GM10248 (cell line): ENCODE measurements at regions of chr14 and their contacts with region 1.

Region 1: DNA sequence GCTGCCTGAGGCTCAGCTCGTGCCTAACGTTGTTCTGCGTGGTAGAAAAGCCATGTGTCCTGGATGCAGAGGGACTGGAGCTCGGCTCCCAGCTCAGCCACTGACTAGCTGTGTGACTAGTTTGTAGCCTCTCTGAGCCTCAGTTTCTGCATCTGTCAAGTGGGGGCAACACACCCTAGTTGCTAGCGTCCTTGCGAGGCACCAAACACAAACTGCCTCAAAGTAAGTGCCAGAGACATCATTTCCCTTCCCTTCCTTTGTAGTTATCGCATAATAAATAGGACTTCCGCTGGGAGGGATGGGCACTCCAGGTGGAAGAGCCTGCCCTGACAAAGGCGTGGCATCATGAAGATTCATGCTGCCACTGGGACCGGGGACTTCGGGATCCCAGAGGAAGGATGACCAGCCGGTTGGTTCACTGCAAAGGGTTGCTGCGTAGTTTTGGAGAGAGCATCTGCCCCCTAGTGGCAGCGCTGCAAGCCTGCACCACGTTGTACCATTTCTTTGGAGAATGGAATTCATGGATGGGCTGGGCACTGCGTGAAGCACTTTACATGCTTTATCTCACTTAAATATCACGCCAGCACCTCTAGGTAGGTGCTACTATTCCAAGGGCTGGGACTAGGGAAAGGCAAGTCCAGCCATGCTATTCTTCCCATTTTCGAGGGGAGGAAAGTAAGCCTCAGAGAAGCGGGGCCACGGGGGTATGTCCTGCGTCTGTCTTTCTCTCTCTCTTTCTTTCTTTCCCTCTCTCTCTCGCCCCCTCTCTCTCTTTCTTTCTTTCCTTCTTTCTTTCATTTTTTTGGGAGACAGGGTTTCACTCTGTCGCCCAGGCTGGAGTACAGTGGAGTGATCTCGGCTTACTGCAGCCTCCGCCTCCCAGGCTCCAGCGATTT is 4.6 kb downstream of the CCDC197 start:
- DNase-seq: peak; percentile 82
- CTCF ChIP-seq: peak; percentile 97

Region 2: DNA sequence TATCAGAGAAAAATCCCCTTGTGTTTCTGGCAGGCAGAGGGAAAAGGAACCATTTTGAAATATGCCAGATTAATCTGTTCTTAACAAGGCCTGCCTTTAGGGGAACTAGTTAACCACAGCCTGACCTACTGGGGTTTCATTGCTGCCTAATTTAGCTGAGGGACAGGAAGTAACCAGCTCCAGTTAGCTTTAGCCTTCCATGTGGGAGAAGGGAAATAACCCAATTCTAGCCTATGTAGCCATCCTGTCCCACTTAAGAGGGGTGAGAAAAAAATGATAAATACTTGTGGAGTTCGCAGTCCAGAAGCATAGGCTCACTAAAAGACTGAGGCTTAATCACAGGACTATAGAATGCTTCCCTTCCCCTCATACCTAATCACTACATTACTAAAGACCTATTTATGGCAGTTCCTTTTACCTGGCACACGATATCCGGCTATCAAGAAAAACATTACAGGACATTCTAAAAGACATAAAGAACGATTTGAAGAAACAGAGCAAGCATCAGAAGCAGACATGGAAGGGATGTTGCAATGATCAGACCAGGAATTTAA is 632.0 kb before region 1 on chr14:
- CTCF ChIA-PET with region 1: no interaction called
- POLR2A ChIA-PET with region 1: no interaction called
- DNase-seq: peak; percentile 46
- CTCF ChIP-seq: no peak

Region 3: DNA sequence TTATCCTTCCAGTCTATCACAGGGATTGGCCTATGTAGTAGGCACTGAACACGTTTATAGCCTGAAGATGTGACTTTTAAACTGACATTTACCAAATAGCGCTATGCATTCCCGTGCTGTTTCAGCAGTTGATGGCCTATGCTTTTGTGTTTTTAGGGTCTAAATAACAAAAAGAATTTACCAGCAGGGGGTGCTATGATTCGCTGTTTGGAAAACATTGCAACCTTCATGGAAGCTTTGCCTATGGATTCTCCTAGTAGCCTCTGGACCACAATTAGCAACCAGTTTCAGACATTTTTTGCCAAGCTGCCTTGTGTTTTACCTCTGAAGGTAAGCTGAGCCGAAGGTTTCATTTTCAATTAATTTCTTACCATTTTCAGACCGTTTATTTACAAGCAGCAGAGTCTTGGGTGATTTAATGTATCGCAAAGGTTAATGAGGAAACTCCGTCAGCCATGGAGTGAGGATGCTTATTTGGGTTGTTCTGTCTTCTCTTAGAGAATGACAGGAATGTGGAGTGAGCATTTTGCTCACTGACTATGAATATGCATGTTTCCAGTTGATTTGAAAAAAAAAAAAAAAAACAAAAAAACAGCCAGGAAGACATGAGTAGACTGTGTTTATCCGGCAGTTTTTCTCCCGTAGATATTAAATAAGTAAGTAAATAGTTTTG is 346.5 kb before region 1 on chr14:
- CTCF ChIA-PET with region 1: interaction called, 13 read pairs
- POLR2A ChIA-PET with region 1: no interaction called
- DNase-seq: peak; percentile 36
- CTCF ChIP-seq: peak; percentile 40

Region 4: GRCh38 chr14:93959239-93960107 is 42.3 kb before region 1 on chr14:
- CTCF ChIA-PET with region 1: interaction called, 90 read pairs
- POLR2A ChIA-PET with region 1: interaction called, 6 read pairs
- DNase-seq: peak; percentile 93
- CTCF ChIP-seq: no peak

Region 5: GRCh38 chr14:93970549-93970946 is 31.2 kb before region 1 on chr14:
- CTCF ChIA-PET with region 1: interaction called, 124 read pairs
- POLR2A ChIA-PET with region 1: no interaction called
- DNase-seq: no peak
- CTCF ChIP-seq: peak; percentile 69

Region 6: DNA sequence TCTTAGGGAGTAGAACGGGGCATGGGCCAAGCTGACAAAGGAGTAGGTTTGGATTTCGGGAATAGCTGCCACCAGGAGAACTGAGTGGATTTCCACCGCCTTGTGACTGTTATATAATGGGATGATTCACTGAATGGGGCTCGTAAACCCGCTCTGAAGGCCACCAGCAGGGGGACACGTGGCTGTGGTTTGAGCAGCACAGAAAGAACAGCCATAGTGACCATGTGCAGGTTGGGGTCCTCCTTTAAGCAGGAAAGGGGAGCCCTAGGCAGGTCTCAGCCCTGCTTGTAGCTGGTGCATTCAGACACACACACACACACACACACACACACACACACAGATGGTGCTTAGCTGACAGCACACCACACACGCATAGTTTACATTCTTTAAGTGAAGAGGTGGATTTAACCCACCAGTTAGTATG is 16.8 kb before region 1 on chr14:
- CTCF ChIA-PET with region 1: interaction called, 124 read pairs
- POLR2A ChIA-PET with region 1: interaction called, 3 read pairs
- DNase-seq: no peak
- CTCF ChIP-seq: peak; percentile 29

Region 7: GRCh38 chr14:94021001-94021400 is 19.3 kb after region 1 on chr14:
- CTCF ChIA-PET with region 1: interaction called, 15 read pairs
- POLR2A ChIA-PET with region 1: interaction called, 3 read pairs
- DNase-seq: no peak
- CTCF ChIP-seq: no peak

Region 8: DNA sequence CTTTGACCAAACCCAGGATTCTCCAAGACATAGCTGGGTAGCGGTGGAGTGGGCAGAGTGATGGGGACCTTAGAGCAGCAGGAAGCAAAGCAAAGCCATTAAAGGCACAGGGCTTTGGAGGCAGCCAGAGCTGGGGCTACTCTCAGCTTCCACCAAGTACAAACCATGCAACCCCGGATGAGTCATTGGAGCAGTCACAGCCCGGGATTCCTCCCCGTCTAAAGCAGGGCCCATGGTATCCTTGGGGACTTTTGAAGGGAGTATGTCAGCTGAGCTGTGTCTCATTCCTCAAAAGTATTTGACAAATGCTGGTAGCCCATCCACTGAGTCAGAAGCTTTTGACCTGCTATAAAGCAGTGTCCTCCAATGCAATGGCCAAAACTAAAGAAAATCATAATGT is 99.1 kb after region 1 on chr14:
- CTCF ChIA-PET with region 1: no interaction called
- POLR2A ChIA-PET with region 1: no interaction called
- DNase-seq: no peak
- CTCF ChIP-seq: no peak

Region 9: GRCh38 chr14:94239406-94239805 is 237.7 kb after region 1 on chr14:
- CTCF ChIA-PET with region 1: no interaction called
- POLR2A ChIA-PET with region 1: no interaction called
- DNase-seq: no peak
- CTCF ChIP-seq: no peak